Thyroid gland (tissue), 4 donors: ENCODE measurements at regions of chr6 and their contacts with region 1.

Region 1: DNA sequence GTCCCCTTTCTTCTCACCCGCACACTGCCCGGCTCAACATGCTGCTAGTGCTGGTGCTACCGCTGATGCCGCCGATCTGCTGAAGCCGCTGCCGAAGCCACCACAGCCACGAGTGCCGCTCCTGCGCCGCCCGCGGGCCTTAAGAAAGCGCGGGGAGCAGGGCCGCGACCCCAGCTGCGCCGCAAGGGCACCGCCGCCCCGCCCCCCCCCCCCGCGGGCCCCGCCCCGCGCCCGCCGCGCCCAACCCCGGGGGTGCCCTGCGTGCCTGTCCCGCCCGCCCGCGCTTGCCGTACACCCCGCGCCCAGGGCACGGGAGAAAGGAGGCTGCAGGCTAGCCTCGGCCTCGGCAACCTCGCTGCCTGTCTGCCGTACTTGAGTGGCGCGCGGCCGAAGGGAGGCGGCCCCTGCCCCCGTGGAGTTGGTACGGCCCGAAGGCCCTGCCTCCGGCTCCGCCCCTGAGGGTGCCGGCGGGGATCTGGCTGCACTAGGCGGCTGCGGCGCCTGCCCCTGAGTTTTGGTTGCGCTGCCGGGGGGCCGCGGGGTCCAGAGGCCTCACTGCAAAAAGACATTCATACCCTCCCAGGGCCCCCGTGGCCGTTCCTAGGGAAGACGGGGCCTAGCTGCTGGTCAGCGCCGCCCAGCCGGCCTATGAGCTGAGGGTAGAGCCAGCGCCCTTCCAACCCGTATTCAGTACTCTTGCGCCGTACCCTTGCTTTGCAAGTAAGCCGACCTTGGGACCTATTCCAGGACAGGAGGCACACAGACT is at the start of gene SOD2:
- DNase-seq: peak; percentile 82 to 83
- H3K4me3 ChIP-seq: peak within 1 kb of the TSS; percentile 74 to 88 (median 86)
- H3K27ac ChIP-seq: peak within 1 kb of the TSS; percentile 93 to 98 (median 97)
- H3K4me1 ChIP-seq: peaks cover 9 to 18% of the 10 kb centered on the region in 2 donors
- H3K27me3 ChIP-seq: no peaks in the 10 kb centered on the region
- CTCF ChIP-seq: no peak
- POLR2A ChIP-seq: peak; percentile 66 to 89
- total RNA-seq, gene SOD2: 132 to 601 (median 296) TPM

Region 2: DNA sequence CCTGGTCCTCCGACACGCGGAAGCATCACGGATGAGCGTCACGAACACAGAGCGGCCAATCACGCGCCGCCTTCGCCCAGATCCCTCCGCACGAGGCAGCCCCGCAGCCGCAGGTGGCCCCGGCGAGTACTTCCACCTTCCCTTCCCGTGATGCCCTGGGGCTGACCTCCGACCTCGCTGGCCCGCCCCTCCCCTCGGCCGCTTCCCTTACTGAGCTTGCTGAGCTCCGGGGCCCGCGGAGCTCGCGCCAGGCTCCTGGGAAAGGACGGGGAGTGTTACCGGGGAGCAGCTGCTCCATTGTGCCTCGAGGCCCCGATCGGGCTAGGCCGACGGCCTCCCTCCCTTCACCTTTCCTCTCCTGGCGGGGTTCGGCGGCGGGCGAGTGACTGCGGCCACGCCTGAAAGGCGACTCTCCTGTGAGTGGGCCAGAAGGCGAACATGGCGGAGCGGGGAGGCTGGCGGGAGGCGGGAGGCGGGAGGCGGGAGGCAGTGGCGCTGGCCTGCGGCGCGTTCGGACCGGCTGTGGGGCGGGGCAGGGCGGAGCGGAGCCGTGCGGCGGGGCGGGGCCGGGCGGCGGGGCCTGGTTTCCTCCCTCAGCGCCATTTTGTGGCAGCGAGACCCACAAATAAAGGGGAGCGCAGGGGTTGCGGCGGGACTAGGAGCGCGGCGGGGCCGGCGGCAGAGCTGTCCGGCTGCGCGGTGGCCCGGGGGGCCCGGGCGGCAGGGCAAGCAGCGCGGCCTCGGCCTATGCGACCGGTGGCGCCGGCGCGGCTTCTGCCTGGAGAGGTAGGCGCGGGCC is 33.8 kb after region 1 on chr6 and contains the start of gene WTAP:
- intact Hi-C with region 1: loop called (anchors 2 kb)
- DNase-seq: peak; percentile 97 to 98
- H3K4me3 ChIP-seq: peak within 1 kb of the TSS; percentile 66 to 98 (median 94)
- H3K27ac ChIP-seq: peak within 1 kb of the TSS; percentile 99 to 100 (median 99)
- H3K4me1 ChIP-seq: peaks cover 18 to 21% of the 10 kb centered on the region in 2 donors
- H3K27me3 ChIP-seq: no peaks in the 10 kb centered on the region
- CTCF ChIP-seq: no peak
- POLR2A ChIP-seq: peak; percentile 78 to 89
- total RNA-seq, gene WTAP: 83.6 to 132 (median 119) TPM

Region 3: GRCh38 chr6:159761873-159762680 is 68.8 kb after region 1 on chr6 and contains the start of gene ACAT2:
- intact Hi-C with region 1: loop called (anchors 10 kb)
- DNase-seq: peak; percentile 96
- H3K4me3 ChIP-seq: peak within 1 kb of the TSS; percentile 62 to 85 (median 68)
- H3K27ac ChIP-seq: peak within 1 kb of the TSS; percentile 95 to 99 (median 95)
- H3K4me1 ChIP-seq: peaks cover 15 to 16% of the 10 kb centered on the region in 2 donors
- H3K27me3 ChIP-seq: no peaks in the 10 kb centered on the region
- CTCF ChIP-seq: peak in 3 of 6 experiments; percentile 15 to 27 (median 26)
- POLR2A ChIP-seq: peak; percentile 9 to 78
- total RNA-seq, gene ACAT2: 5.6 to 10.4 (median 7.0) TPM

Region 4: DNA sequence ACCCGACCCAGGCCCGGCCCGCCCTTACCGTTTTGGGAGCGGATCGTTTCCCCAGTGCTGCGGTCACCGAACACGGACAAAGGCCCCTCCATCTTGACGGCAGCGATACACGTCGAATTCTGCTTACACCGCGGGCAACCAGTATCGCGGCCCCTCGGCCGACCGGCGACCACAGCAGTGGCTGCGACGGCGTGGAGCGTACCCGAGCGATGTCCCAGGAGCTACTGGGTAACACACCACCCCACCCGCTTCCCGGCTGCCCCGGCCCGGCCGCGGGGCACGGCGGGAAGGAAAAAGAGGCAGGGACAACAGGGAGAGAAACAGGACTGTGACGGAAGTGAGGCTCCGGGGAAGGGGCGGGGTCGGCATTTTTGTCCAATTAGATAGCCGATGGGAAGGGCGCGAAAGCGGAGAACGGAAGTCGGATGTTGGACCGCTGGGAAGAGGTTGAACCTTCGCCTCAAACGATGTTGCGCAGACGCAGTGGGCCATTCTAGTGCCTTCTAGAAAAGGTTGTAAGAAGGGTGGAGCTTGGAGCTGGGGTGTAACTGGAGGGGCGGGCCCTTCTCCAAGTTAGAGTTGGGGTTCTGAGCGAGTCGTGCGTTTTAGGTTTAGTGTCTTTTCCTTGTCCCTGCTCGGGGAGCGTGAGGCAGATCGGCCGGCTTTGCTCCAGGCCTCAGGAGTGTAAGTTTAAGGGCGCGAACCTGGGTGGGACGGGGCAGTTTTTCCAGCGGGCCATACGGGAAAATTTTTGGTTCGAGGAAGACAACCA is 96.3 kb after region 1 on chr6 and contains the start of gene TCP1:
- intact Hi-C with region 1: loop called (anchors 5 kb)
- DNase-seq: peak; percentile 100
- H3K4me3 ChIP-seq: peak within 1 kb of the TSS; percentile 64 to 81 (median 78)
- H3K27ac ChIP-seq: peak within 1 kb of the TSS; percentile 86 to 99 (median 99)
- H3K4me1 ChIP-seq: peaks cover 24 to 27% of the 10 kb centered on the region in 2 donors
- H3K27me3 ChIP-seq: no peaks in the 10 kb centered on the region
- CTCF ChIP-seq: no peak
- POLR2A ChIP-seq: peak; percentile 89 to 95
- total RNA-seq, gene TCP1: 93.4 to 139 (median 124) TPM

Region 5: DNA sequence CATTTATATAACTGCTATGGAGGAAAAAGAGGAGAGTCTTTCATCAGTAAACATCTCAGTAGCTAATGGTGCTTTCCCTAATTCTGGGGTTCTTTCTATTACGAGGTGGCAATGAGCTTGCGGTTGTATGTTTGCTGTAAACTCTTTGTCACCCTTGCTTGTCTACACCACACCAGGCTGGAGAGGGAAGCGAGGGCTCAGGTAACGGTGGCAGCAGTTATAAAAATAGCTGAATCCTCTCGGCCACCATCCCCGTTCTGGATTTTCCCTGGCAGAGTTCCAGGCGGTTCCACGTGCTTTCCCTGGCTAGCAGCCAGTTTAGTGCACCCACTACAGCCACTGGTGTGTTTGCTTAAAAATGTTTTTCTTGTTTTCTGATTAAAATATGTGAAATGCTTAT is 236.5 kb after region 1 on chr6:
- intact Hi-C with region 1: no loop called
- DNase-seq: peak; percentile 80 to 88
- H3K4me3 ChIP-seq: no peak overlapping the region
- H3K27ac ChIP-seq: peak overlapping the region; percentile 10 to 49 (median 13)
- H3K4me1 ChIP-seq: peaks cover 22 to 27% of the 10 kb centered on the region in 2 donors
- H3K27me3 ChIP-seq: no peaks in the 10 kb centered on the region
- CTCF ChIP-seq: no peak
- POLR2A ChIP-seq: no peak